CD8-positive, alpha-beta memory T cell (primary cell): ENCODE measurements at regions of chr9 and their contacts with region 1.

Region 1: GRCh38 chr9:34010979-34011378 is 37.7 kb downstream of the UBAP2 start:
- DNase-seq: peak in 2 of 5 donors; percentile 12
- H3K4me3 ChIP-seq: no peak overlapping the region
- H3K4me3 Mint-ChIP-seq: no peak overlapping the region
- H3K27ac ChIP-seq: no peak overlapping the region
- H3K27ac Mint-ChIP-seq: no peak overlapping the region
- H3K4me1 ChIP-seq: no peaks in the 10 kb centered on the region
- H3K4me1 Mint-ChIP-seq: no peaks in the 10 kb centered on the region
- H3K27me3 ChIP-seq: no peaks in the 10 kb centered on the region
- H3K27me3 Mint-ChIP-seq: no peaks in the 10 kb centered on the region

Region 2: GRCh38 chr9:34252670-34253459 is 241.9 kb after region 1 on chr9:
- CTCF ChIA-PET with region 1: interaction called, 13 read pairs
- POLR2A ChIA-PET with region 1: no interaction called
- DNase-seq: peak; percentile 25 to 76 (median 54)
- H3K4me3 ChIP-seq: no peak overlapping the region
- H3K4me3 Mint-ChIP-seq: no peak overlapping the region
- H3K27ac ChIP-seq: no peak overlapping the region
- H3K27ac Mint-ChIP-seq: peak overlapping the region in 7 of 8 donors; percentile 59 to 94 (median 72)
- H3K4me1 ChIP-seq: peaks cover 8% of the 10 kb centered on the region
- H3K4me1 Mint-ChIP-seq: peaks cover 6 to 12% (median 10%) of the 10 kb centered on the region in 3 donors
- H3K27me3 ChIP-seq: no peaks in the 10 kb centered on the region
- H3K27me3 Mint-ChIP-seq: no peaks in the 10 kb centered on the region